Cardiac septum (tissue), 1 donor: ENCODE measurements at regions of chr2 and their contacts with region 1.

Region 1: DNA sequence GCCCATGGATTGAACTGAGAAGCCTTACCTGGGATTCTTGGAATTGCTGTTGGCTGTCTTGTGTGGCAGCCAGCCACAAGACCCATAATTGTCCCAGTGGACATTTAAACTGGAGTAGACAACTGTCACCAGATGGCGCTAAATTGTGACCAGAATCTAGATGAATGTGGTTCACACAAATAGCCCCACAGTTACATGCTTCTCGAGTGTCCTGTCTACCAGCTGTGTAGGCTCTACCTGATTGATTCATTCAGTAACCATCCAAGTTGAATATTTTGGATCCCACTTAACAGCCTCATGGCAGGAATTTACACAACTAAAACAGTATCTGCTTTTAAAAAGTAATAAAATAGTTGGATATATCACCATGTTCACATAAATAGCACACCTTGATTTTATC is 73.2 kb downstream of the MAP4K4 start:
- DNase-seq: no peak

Region 2: GRCh38 chr2:101587251-101587650 is 183.5 kb before region 1 on chr2:
- intact Hi-C with region 1: no loop called
- DNase-seq: no peak

Region 3: DNA sequence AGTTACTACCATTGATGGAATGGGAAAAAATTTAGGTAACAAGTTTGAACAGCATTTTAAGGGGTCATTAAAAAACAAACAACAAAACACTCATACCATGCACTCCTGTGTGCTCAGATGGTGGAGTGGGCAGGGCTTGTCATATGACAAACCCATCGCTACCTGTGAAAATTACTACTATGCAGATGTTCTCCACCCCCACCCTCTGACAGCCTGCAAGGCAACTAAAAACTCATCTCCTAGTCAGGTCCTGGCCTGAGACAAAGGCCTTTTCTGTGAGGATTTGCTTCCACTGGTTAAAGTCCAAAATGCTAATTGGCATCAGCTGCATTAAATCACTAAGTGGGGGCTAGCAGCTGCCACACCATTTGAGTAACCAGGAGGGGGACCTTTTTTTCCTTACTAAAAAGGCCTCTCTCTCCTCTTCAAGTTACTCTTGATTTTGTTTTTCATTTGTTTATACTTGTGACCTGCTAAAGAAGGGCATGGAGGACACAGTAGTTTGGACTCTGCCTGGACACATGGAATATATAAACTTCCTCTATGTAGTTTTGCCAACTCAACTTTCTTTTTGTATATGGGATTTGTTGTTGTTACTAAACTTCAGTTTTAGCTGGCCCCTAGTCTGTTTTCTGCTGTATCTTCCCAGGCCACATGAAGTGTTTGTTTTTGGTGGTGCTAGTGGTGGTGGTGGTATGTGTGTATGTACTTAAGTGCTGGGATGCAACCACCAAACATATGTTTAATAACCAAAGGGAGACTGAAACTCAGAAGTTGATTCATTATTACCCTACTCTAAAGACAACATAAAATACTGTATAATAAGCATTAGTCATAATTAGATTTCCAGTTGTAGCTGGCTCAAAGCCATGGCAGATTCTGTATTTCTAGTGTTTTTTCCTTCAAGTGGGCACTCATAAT is 48.1 kb after region 1 on chr2:
- intact Hi-C with region 1: loop called (anchors 5 kb)
- DNase-seq: no peak